Heart right ventricle (tissue), 16 donors: ENCODE measurements at regions of chr5 and their contacts with region 1.

Region 1: GRCh38 chr5:58855851-58856739 is 273.2 kb downstream of the RAB3C start:
- DNase-seq: no peak
- ATAC-seq: no peak
- H3K4me3 ChIP-seq: no peak overlapping the region
- H3K27ac ChIP-seq: no peak overlapping the region
- H3K4me1 ChIP-seq: peaks cover 0 to 5% (median 0%) of the 10 kb centered on the region in 9 donors
- H3K27me3 ChIP-seq: no peaks in the 10 kb centered on the region
- CTCF ChIP-seq: no peak

Region 2: DNA sequence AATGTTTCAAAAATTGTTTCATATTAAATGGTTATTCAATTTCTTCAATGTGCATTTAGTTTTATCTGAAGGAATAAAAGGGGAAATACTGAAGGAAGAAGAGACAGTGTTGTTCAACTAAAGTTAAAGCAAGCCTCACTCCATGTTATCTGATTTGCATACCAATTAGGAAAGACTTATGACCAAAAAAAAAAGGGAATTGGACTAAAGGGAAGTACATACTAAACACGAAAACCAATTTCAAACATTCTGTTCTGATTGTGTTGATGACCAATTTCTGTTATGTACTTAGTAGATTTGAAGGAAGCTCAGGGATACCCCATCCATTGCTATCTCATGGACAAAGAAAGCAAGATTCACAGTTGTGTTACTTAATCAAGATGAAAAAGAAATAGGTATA is 369.8 kb before region 1 on chr5:
- intact Hi-C with region 1: loop called in 1 of 10 experiments (anchors 5 kb)
- DNase-seq: no peak
- ATAC-seq: no peak
- H3K4me3 ChIP-seq: no peak overlapping the region
- H3K27ac ChIP-seq: no peak overlapping the region
- H3K4me1 ChIP-seq: peaks cover 0 to 28% (median 0%) of the 10 kb centered on the region in 9 donors
- H3K27me3 ChIP-seq: peaks cover 0 to 45% (median 9%) of the 10 kb centered on the region in 7 donors
- CTCF ChIP-seq: no peak

Region 3: GRCh38 chr5:58818462-58818861 is 37.6 kb before region 1 on chr5:
- intact Hi-C with region 1: no loop called
- DNase-seq: no peak
- ATAC-seq: no peak
- H3K4me3 ChIP-seq: no peak overlapping the region
- H3K27ac ChIP-seq: no peak overlapping the region
- H3K4me1 ChIP-seq: no peaks in the 10 kb centered on the region
- H3K27me3 ChIP-seq: no peaks in the 10 kb centered on the region
- CTCF ChIP-seq: no peak

Region 4: DNA sequence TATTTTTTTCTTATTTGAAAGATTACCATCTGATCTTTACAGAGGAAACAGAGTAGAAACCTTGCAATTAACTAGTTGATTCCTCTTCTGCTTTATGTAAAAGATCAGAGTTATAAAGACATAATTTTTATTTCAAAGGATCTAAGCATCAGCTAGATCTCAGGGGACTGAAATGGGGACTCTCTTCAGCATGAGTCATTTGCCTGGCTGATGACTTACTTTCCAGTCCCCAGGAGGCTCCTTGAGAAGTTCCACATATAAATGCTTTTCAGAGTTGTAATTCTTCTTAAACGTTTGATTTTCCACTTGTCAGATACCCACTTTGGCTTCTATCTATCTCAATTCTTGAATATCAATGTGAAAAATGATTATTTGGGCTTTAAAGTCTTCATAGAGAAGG is 116.2 kb after region 1 on chr5:
- intact Hi-C with region 1: no loop called
- DNase-seq: no peak
- ATAC-seq: peak in 1 of 8 donors; percentile 56
- H3K4me3 ChIP-seq: no peak overlapping the region
- H3K27ac ChIP-seq: no peak overlapping the region
- H3K4me1 ChIP-seq: peaks cover 0 to 6% (median 0%) of the 10 kb centered on the region in 9 donors
- H3K27me3 ChIP-seq: no peaks in the 10 kb centered on the region
- CTCF ChIP-seq: no peak